ENCODE measurements at regions of chr10 and their contacts with region 1.

Region 1: GRCh38 chr10:73743905-73744663 is at the start of gene SEC24C:
- DNase-seq: peak; percentile 98
- H3K27ac ChIP-seq: peak within 1 kb of the TSS; percentile 87
- CTCF ChIP-seq: no peak

Region 2: GRCh38 chr10:73771722-73772279 is 27.7 kb after region 1 on chr10:
- CTCF ChIA-PET with region 1: interaction called, 4 read pairs
- POLR2A ChIA-PET with region 1: interaction called, 10 read pairs
- DNase-seq: peak; percentile 88
- H3K27ac ChIP-seq: peak overlapping the region; percentile 97
- CTCF ChIP-seq: no peak

Region 3: DNA sequence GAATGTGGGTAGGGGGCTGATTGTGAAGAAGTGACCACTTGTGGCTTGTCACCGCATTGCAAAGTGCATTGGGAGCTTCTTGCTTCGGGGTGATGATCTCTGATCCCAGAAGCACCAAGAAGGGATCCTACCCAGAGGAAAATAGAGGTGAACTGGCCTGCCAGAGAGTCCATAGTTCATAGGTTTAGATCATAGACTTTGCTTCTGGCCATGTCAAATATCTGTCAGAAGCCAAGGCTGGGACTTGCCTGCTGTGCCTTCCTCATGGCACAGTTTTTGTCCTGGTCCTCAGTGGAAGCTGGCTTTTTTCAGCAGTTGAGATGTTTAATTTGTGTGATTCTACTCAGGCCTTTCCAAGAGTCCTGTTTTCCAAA is 42.4 kb after region 1 on chr10:
- CTCF ChIA-PET with region 1: no interaction called
- POLR2A ChIA-PET with region 1: no interaction called
- DNase-seq: no peak
- H3K27ac ChIP-seq: peak overlapping the region; percentile 84
- CTCF ChIP-seq: no peak